GM23248 (cell line): ENCODE measurements at regions of chr2 and their contacts with region 1.

Region 1: DNA sequence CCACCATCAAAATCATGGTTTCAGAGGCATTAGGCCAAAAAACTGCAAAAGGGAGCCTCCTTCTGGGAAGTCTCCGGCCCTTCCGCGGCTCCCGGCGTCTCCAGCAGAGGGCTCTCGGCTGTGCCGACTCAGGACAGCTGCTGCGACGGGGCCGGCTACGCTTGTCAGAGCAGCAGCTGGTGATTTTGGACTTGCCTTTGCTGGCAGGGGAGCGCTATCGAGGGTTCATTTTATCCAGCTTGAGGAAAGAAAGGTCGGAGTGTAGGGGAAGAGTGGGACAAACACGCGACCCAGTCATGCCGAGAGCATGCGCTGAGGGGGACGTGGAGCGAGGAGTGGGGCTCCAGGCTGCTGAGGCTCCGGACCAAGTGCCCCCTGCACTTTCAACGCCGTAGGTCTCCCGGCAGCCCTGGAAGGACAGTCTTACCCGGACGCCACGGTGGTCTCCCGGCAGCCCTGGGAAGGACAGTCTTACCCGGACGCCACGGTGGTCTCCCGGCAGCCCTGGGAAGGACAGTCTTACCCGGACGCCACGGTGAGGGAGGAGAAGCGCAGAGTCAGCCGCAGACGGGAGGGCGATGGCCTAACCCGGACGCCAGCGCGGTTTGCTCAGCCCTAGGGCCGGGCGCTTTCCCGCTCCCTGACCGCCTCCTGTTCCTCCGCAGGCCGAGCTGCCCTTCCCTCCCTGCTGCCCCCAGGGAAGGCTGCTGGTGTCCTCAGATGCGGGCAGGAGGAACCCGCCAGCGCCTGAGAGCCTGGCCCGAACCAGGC is 21.7 kb downstream of the DDX18 start:
- DNase-seq: peak; percentile 96
- H3K4me3 ChIP-seq: peak overlapping the region; percentile 67
- H3K27ac ChIP-seq: no peak overlapping the region
- H3K4me1 ChIP-seq: no peaks in the 10 kb centered on the region
- H3K27me3 ChIP-seq: no peaks in the 10 kb centered on the region

Region 2: GRCh38 chr2:118003396-118003824 is 167.2 kb after region 1 on chr2:
- in situ Hi-C with region 1: loop called (anchors 10 kb)
- DNase-seq: peak; percentile 83
- H3K4me3 ChIP-seq: no peak overlapping the region
- H3K27ac ChIP-seq: no peak overlapping the region
- H3K4me1 ChIP-seq: 0 out of 2 replicates have a peak, but pooled peaks cover 3% of the 10 kb centered on the region
- H3K27me3 ChIP-seq: no peaks in the 10 kb centered on the region